Mammary epithelial cell (primary cell): ENCODE measurements at regions of chr12 and their contacts with region 1.

Region 1: DNA sequence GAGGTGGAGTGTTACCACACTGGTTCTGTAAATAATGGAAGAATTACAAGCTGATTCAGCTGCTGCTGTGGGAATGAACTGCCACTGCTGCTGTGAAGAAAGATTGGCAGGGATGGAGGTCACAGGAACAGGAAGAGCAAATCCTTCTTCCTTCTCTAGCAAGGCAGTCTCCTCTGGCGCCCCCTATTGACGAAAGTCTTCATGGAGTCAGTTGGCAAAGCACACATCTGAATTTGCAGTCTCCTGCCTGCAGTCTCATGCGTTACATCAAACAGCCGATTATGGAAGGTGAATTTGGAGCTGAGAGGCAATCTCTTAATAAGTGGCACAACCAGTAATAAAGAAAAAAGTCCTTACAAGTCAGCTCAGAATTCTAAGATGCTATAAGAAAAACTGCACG is 106.0 kb upstream of the TMTC1 start:
- DNase-seq: peak; percentile 52
- H3K4me3 ChIP-seq: no peak overlapping the region
- H3K27ac ChIP-seq: no peak overlapping the region
- H3K4me1 ChIP-seq: no peaks in the 10 kb centered on the region
- H3K27me3 ChIP-seq: no peaks in the 10 kb centered on the region
- CTCF ChIP-seq: peak; percentile 61 to 82

Region 2: DNA sequence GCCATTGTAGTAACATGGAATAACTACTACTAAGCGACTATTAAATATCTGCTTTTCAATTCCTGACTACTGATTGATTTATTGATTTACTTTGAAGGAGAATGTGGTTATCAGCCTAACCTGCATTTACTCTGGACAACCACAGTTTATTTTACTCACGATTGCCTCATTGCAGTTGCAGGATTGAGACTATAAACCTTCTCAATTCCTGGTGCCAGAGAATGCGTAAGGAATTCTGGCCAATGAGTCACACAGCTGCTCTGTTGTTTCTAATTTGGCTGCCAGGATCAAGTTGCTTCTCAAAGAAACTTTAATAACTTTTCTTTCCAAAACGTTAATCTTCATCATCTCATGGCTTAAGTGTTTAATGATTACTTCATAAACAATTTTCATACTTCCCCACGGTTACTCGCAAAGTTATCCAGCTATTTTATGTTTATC is 92.9 kb before region 1 on chr12:
- CTCF ChIA-PET with region 1: no interaction called
- dilution Hi-C with region 1: no loop called
- in situ Hi-C with region 1: no loop called
- intact Hi-C with region 1: loop called (anchors 5 kb)
- DNase-seq: peak; percentile 81
- H3K4me3 ChIP-seq: no peak overlapping the region
- H3K27ac ChIP-seq: no peak overlapping the region
- H3K4me1 ChIP-seq: peaks cover 13% of the 10 kb centered on the region
- H3K27me3 ChIP-seq: no peaks in the 10 kb centered on the region
- CTCF ChIP-seq: no peak

Region 3: DNA sequence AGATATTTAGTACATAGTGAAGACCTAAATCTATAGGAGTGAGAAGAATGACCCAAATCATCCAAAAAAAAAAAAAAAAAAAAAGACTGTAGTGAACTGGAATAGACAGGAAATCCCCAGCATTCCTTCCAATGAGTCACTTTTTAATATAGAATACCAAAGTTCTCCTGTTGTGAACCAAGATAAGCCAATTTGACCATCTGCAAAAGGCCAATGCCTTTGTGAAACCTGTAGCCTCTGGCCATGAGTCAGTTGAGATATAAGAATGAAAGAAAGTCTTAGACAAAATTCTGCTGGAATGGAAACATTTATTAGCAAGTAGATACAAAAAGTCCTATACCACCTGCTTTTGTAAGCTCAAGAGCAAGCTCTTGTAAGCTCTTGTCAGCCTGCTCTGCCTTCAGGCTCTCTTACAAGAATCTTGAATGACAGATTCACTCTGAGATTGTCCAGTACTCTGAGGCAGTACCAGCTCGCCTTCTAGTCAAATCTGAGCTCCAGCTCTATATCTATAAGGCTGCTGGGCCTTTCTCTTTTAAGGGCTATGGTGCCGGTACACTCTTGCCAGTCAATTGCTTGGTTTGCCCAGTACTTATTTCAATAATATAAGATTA is 137.0 kb after region 1 on chr12:
- CTCF ChIA-PET with region 1: no interaction called
- dilution Hi-C with region 1: no loop called
- in situ Hi-C with region 1: no loop called
- intact Hi-C with region 1: no loop called
- DNase-seq: peak; percentile 72
- H3K4me3 ChIP-seq: no peak overlapping the region
- H3K27ac ChIP-seq: no peak overlapping the region
- H3K4me1 ChIP-seq: peaks cover 16% of the 10 kb centered on the region
- H3K27me3 ChIP-seq: no peaks in the 10 kb centered on the region
- CTCF ChIP-seq: no peak